Dorsolateral prefrontal cortex (tissue), 120 donors: ENCODE measurements at regions of chr12 and their contacts with region 1.

Region 1: DNA sequence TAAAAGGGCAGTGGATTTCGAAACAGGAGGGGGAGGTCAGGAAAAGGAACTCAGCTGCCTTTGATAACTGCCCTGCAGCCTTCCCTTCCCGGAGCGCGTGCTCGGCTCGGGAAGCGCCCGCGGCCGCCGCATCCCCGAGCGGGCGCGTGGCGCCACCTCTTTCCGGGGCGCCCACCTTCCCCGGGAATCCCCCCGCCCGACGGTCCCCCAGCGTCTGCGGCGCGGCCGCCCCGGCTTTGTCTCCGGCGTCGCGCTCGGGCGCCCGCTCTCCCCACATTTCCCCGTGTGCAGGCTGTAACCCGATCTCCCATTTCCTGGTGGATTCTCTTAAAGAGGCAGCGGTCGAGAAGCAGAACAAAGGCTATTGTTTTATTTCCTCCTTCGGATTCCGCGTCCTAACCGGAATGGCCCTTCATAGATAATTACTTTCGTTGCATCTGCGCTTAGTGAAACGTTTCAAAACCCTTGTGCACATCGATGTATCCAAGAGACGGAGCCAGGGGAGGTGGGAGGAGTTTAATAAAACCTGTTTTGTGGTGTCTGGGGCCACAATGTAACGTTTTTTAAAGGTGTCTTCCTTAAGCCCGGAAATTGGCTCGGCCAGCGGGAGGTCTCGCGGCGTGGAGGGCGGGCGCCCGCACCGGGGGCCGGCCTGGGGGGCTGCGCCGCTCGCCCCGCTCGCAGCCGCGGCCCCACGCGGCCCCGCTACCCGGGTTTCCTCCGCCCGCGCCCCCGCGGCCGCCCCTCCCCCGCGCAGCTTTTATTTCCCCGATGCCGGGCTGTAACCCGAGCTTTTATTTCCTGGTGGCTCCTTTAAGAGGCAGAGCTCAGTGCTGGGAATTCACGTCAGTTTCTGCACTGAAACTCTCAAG is at the start of gene ETV6:
- DNase-seq: peak in 9 of 10 donors; percentile 34 to 74 (median 61)
- H3K4me3 ChIP-seq: peak within 1 kb of the TSS; percentile 54 to 93 (median 82)
- H3K27ac ChIP-seq: peak within 1 kb of the TSS; percentile 77 to 99 (median 95)
- H3K27me3 ChIP-seq: no peaks in the 10 kb centered on the region
- CTCF ChIP-seq: peak in 28 of 56 donors; percentile 7 to 51 (median 30)
- total RNA-seq, gene ETV6: 12.1 to 46.3 (median 20.4) TPM

Region 2: GRCh38 chr12:11765817-11766794 is 117.0 kb after region 1 on chr12:
- intact Hi-C with region 1: loop called in 1 of 2 experiments (anchors 10 kb)
- DNase-seq: no peak
- H3K4me3 ChIP-seq: peak overlapping the region in 10 of 59 donors; percentile 1 to 22 (median 12)
- H3K27ac ChIP-seq: peak overlapping the region in 50 of 59 donors; percentile 11 to 84 (median 56)
- H3K27me3 ChIP-seq: no peaks in the 10 kb centered on the region
- CTCF ChIP-seq: no peak

Region 3: GRCh38 chr12:11798856-11799501 is 149.9 kb after region 1 on chr12:
- intact Hi-C with region 1: loop called in 1 of 2 experiments (anchors 10 kb)
- DNase-seq: no peak
- H3K4me3 ChIP-seq: no peak overlapping the region
- H3K27ac ChIP-seq: peak overlapping the region in 4 of 59 donors; percentile 2 to 24 (median 6)
- H3K27me3 ChIP-seq: no peaks in the 10 kb centered on the region
- CTCF ChIP-seq: no peak

Region 4: GRCh38 chr12:11812586-11813427 is 163.7 kb after region 1 on chr12:
- intact Hi-C with region 1: loop called (anchors 2 to 10 kb)
- DNase-seq: peak in 3 of 10 donors; percentile 41 to 66 (median 48)
- H3K4me3 ChIP-seq: peak overlapping the region; percentile 15 to 68 (median 46)
- H3K27ac ChIP-seq: peak overlapping the region; percentile 77 to 99 (median 94)
- H3K27me3 ChIP-seq: no peaks in the 10 kb centered on the region
- CTCF ChIP-seq: peak in 30 of 56 donors; percentile 5 to 41 (median 20)

Region 5: GRCh38 chr12:12010277-12011039 is 361.4 kb after region 1 on chr12:
- intact Hi-C with region 1: loop called in 1 of 2 experiments (anchors 10 kb)
- DNase-seq: peak in 8 of 10 donors; percentile 39 to 68 (median 54)
- H3K4me3 ChIP-seq: peak overlapping the region in 55 of 59 donors; percentile 0 to 63 (median 42)
- H3K27ac ChIP-seq: peak overlapping the region in 29 of 59 donors; percentile 11 to 74 (median 50)
- H3K27me3 ChIP-seq: no peaks in the 10 kb centered on the region
- CTCF ChIP-seq: no peak

Region 6: GRCh38 chr12:12032851-12033588 is 384.0 kb after region 1 on chr12:
- intact Hi-C with region 1: loop called in 1 of 2 experiments (anchors 10 kb)
- DNase-seq: peak; percentile 67 to 89 (median 80)
- H3K4me3 ChIP-seq: peak overlapping the region; percentile 24 to 71 (median 53)
- H3K27ac ChIP-seq: peak overlapping the region in 55 of 59 donors; percentile 22 to 90 (median 79)
- H3K27me3 ChIP-seq: no peaks in the 10 kb centered on the region
- CTCF ChIP-seq: peak; percentile 82 to 97 (median 91)

Region 7: DNA sequence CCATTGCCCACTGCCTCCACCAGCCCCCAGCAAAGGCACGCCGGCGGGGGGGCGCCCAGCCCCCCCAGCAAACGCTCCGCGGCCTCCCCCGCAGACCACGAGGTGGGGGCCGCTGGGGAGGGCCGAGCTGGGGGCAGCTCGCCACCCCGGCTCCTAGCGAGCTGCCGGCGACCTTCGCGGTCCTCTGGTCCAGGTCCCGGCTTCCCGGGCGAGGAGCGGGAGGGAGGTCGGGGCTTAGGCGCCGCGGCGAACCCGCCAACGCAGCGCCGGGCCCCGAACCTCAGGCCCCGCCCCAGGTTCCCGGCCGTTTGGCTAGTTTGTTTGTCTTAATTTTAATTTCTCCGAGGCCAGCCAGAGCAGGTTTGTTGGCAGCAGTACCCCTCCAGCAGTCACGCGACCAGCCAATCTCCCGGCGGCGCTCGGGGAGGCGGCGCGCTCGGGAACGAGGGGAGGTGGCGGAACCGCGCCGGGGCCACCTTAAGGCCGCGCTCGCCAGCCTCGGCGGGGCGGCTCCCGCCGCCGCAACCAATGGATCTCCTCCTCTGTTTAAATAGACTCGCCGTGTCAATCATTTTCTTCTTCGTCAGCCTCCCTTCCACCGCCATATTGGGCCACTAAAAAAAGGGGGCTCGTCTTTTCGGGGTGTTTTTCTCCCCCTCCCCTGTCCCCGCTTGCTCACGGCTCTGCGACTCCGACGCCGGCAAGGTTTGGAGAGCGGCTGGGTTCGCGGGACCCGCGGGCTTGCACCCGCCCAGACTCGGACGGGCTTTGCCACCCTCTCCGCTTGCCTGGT is 1067.9 kb after region 1 on chr12 and contains the start of gene CDKN1B:
- intact Hi-C with region 1: loop called in 1 of 2 experiments (anchors 10 kb)
- DNase-seq: peak; percentile 79 to 92 (median 90)
- H3K4me3 ChIP-seq: peak within 1 kb of the TSS; percentile 54 to 100 (median 95)
- H3K27ac ChIP-seq: peak within 1 kb of the TSS; percentile 98 to 100 (median 100)
- H3K27me3 ChIP-seq: no peaks in the 10 kb centered on the region
- CTCF ChIP-seq: peak in 20 of 56 donors; percentile 6 to 41 (median 22)
- total RNA-seq, gene CDKN1B: 58.4 to 148 (median 88.8) TPM